ENCODE measurements at regions of chr12 and their contacts with region 1.

Region 1: GRCh38 chr12:77324763-77325468 is 259.5 kb upstream of the E2F7 start:
- DNase-seq: peak; percentile 72
- H3K4me3 ChIP-seq: peak overlapping the region; percentile 49 to 84 (median 72)
- H3K27ac ChIP-seq: no peak overlapping the region
- H3K4me1 ChIP-seq: peaks cover 6% of the 10 kb centered on the region
- H3K27me3 ChIP-seq: peaks cover 18 to 19% of the 10 kb centered on the region in 2 experiments
- CTCF ChIP-seq: peak; percentile 52 to 69
- POLR2A ChIP-seq: no peak

Region 2: GRCh38 chr12:76329163-76329562 is 995.8 kb before region 1 on chr12:
- CTCF ChIA-PET with region 1: no interaction called
- POLR2A ChIA-PET with region 1: no interaction called
- dilution Hi-C with region 1: no loop called
- intact Hi-C with region 1: no loop called
- DNase-seq: peak; percentile 73
- H3K4me3 ChIP-seq: no peak overlapping the region
- H3K27ac ChIP-seq: peak overlapping the region; percentile 50
- H3K4me1 ChIP-seq: peaks cover 14% of the 10 kb centered on the region
- H3K27me3 ChIP-seq: no peaks in the 10 kb centered on the region
- CTCF ChIP-seq: no peak
- POLR2A ChIP-seq: no peak

Region 3: GRCh38 chr12:77049767-77050353 is 275.1 kb before region 1 on chr12:
- CTCF ChIA-PET with region 1: interaction called, 10 read pairs
- POLR2A ChIA-PET with region 1: no interaction called
- dilution Hi-C with region 1: no loop called
- intact Hi-C with region 1: loop called (anchors 1 kb)
- DNase-seq: peak; percentile 78
- H3K4me3 ChIP-seq: no peak overlapping the region
- H3K27ac ChIP-seq: no peak overlapping the region
- H3K4me1 ChIP-seq: no peaks in the 10 kb centered on the region
- H3K27me3 ChIP-seq: no peaks in the 10 kb centered on the region
- CTCF ChIP-seq: peak; percentile 60 to 64
- POLR2A ChIP-seq: no peak

Region 4: GRCh38 chr12:77065361-77066204 is 259.3 kb before region 1 on chr12 and contains the start of gene E2F7:
- CTCF ChIA-PET with region 1: no interaction called
- POLR2A ChIA-PET with region 1: no interaction called
- dilution Hi-C with region 1: no loop called
- intact Hi-C with region 1: loop called (anchors 1 kb)
- DNase-seq: peak; percentile 91
- H3K4me3 ChIP-seq: peak within 1 kb of the TSS; percentile 64 to 90 (median 83)
- H3K27ac ChIP-seq: peak within 1 kb of the TSS; percentile 35
- H3K4me1 ChIP-seq: peaks cover 30% of the 10 kb centered on the region
- H3K27me3 ChIP-seq: no peaks in the 10 kb centered on the region
- CTCF ChIP-seq: no peak
- POLR2A ChIP-seq: peak; percentile 70
- total RNA-seq, gene E2F7: 19.8 and 24.4 TPM in 2 replicates

Region 5: GRCh38 chr12:77152623-77153193 is 172.2 kb before region 1 on chr12:
- CTCF ChIA-PET with region 1: interaction called, 53 read pairs
- POLR2A ChIA-PET with region 1: no interaction called
- dilution Hi-C with region 1: no loop called
- intact Hi-C with region 1: loop called (anchors 1 kb)
- DNase-seq: peak; percentile 68
- H3K4me3 ChIP-seq: no peak overlapping the region
- H3K27ac ChIP-seq: no peak overlapping the region
- H3K4me1 ChIP-seq: no peaks in the 10 kb centered on the region
- H3K27me3 ChIP-seq: no peaks in the 10 kb centered on the region
- CTCF ChIP-seq: peak; percentile 32 to 48
- POLR2A ChIP-seq: no peak

Region 6: GRCh38 chr12:77314378-77315052 is 10.4 kb before region 1 on chr12:
- CTCF ChIA-PET with region 1: interaction called, 22 read pairs
- POLR2A ChIA-PET with region 1: no interaction called
- dilution Hi-C with region 1: no loop called
- intact Hi-C with region 1: no loop called
- DNase-seq: no peak
- H3K4me3 ChIP-seq: no peak overlapping the region
- H3K27ac ChIP-seq: no peak overlapping the region
- H3K4me1 ChIP-seq: no peaks in the 10 kb centered on the region
- H3K27me3 ChIP-seq: peaks cover 0 to 2% of the 10 kb centered on the region in 2 experiments
- CTCF ChIP-seq: no peak
- POLR2A ChIP-seq: no peak

Region 7: DNA sequence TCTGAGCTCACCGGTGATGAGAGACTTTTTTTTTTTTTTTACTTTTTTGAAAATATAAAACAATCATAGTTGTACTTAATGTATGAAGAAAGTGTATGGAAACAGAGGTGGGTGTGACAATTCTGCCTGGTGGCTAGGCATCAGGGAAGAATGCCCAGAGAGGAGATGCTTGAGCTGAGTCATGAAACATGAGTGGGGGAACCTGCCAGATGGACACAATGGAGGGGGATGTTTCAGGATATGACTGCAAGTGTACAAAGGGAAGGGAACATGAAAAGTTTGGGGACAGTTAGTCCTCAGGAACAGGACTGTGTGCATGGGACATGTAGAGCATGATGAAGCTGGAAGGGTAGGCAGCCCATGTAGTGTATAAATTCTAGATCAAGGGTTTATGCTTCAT is 14.7 kb after region 1 on chr12:
- CTCF ChIA-PET with region 1: interaction called, 12 read pairs
- POLR2A ChIA-PET with region 1: no interaction called
- dilution Hi-C with region 1: no loop called
- intact Hi-C with region 1: no loop called
- DNase-seq: no peak
- H3K4me3 ChIP-seq: no peak overlapping the region
- H3K27ac ChIP-seq: no peak overlapping the region
- H3K4me1 ChIP-seq: peaks cover 12% of the 10 kb centered on the region
- H3K27me3 ChIP-seq: no peaks in the 10 kb centered on the region
- CTCF ChIP-seq: no peak
- POLR2A ChIP-seq: no peak

Region 8: GRCh38 chr12:77514511-77514910 is 189.6 kb after region 1 on chr12:
- CTCF ChIA-PET with region 1: no interaction called
- POLR2A ChIA-PET with region 1: no interaction called
- dilution Hi-C with region 1: no loop called
- intact Hi-C with region 1: no loop called
- DNase-seq: no peak
- H3K4me3 ChIP-seq: no peak overlapping the region
- H3K27ac ChIP-seq: no peak overlapping the region
- H3K4me1 ChIP-seq: no peaks in the 10 kb centered on the region
- H3K27me3 ChIP-seq: peaks cover 0 to 1% of the 10 kb centered on the region in 2 experiments
- CTCF ChIP-seq: no peak
- POLR2A ChIP-seq: no peak

Region 9: DNA sequence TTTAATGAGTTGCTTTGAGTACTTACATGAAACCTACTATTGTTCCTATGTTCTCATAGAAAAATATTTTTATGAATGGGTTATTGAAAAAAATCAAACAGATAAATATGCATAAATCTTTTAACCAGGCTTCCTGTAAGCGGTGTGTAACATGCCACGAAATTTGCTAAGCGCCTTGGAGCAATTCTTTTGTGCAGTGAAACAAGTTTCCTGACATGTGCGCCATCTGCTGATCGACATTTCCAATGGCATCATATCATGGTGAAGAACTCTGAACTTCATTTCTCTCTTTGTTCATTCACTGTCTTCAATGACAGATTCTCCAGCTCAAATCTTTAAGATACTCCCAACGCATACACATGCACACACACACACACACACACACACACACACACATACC is 360.2 kb after region 1 on chr12:
- CTCF ChIA-PET with region 1: interaction called, 7 read pairs
- POLR2A ChIA-PET with region 1: no interaction called
- dilution Hi-C with region 1: no loop called
- intact Hi-C with region 1: loop called (anchors 10 kb)
- DNase-seq: peak; percentile 80
- H3K4me3 ChIP-seq: no peak overlapping the region
- H3K27ac ChIP-seq: no peak overlapping the region
- H3K4me1 ChIP-seq: peaks cover 2% of the 10 kb centered on the region
- H3K27me3 ChIP-seq: peaks cover 0 to under 1% of the 10 kb centered on the region in 2 experiments
- CTCF ChIP-seq: peak; percentile 54 to 57
- POLR2A ChIP-seq: no peak

Measured in endothelial cell of umbilical vein (primary cell).